Panc1 (cell line): ENCODE measurements at regions of chr3 and their contacts with region 1.

Region 1: DNA sequence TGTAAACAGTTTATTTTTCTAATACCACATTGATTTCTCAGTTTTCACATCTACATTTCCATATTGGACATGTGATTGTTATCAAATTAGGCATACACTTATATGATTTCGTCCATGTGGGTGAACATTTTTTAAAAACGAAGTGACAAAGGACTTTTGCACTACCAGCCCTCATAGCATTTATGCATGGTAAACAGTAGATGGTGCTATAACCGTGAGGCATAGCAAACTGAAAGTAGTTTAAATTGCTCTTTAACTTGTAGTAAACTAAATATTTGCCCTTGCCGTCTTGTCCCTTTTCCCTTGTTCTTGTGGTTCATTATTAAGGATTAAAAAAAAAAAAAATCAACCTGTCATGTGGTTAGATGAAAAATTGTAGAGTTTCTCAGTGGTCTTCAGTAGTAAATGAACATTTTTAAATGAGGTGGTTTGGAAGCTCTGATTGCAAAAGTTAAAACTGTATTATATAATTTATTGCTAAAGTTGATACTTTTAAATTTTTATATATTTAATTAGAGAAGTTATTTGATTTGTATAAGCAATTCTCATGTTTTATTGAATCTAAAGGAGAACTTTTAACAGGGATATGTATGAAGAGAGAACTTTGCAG is 24.0 kb downstream of the STX19 start:
- DNase-seq: peak; percentile 42
- ATAC-seq: peak; percentile 80
- H3K4me3 ChIP-seq: no peak overlapping the region; a peak in 1 of 4 replicates
- H3K27ac ChIP-seq: peak overlapping the region; percentile 46; the same call in 1 of the 2 replicates
- H3K4me1 ChIP-seq: no peaks in the 10 kb centered on the region
- H3K27me3 ChIP-seq: no peaks in the 10 kb centered on the region
- CTCF ChIP-seq: peak; percentile 88; the same call in 1 of the 2 replicates

Region 2: DNA sequence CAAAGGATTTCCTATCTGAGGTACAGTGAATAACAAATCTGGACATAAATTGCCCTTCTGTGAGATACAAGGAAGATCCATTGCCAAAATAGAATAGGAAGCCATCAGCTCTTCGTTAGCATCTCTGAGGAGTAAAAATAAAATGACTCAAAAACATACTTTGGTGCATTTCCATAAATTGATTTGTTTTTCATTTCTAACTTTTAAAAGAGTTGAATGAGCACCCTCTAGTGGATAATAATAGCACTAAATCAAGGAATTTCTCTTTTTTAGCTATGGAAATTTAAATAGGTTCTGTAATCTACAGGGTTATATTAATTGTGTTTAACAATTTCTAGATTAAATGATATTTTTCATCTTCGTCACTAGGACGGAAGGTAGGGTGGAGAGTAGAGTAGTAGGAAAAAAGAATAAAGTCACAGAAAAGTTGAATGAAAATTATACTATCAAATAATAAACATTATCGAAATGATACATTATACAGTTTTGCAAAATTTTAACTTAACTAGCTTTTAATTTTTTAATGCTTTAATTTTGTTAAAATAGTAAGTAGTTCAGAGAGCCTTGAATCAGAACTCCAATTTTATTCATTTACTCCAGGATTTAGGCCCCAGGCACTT is 64.9 kb after region 1 on chr3:
- CTCF ChIA-PET with region 1: interaction called, 3 read pairs
- POLR2A ChIA-PET with region 1: interaction called, 3 read pairs
- in situ Hi-C with region 1: no loop called
- intact Hi-C with region 1: loop called (anchors 2 kb)
- DNase-seq: no peak
- ATAC-seq: no peak
- H3K4me3 ChIP-seq: no peak overlapping the region
- H3K27ac ChIP-seq: no peak overlapping the region
- H3K4me1 ChIP-seq: peaks cover 4% of the 10 kb centered on the region
- H3K27me3 ChIP-seq: no peaks in the 10 kb centered on the region
- CTCF ChIP-seq: peak; percentile 70; the same call in 1 of the 2 replicates

Region 3: GRCh38 chr3:94156626-94157025 is 152.2 kb after region 1 on chr3:
- CTCF ChIA-PET with region 1: no interaction called
- POLR2A ChIA-PET with region 1: no interaction called
- in situ Hi-C with region 1: no loop called
- intact Hi-C with region 1: no loop called
- DNase-seq: no peak
- ATAC-seq: no peak
- H3K4me3 ChIP-seq: no peak overlapping the region
- H3K27ac ChIP-seq: no peak overlapping the region
- H3K4me1 ChIP-seq: no peaks in the 10 kb centered on the region
- H3K27me3 ChIP-seq: no peaks in the 10 kb centered on the region; the same call in 1 of the 2 replicates
- CTCF ChIP-seq: no peak